ENCODE measurements at regions of chr16 and their contacts with region 1.

Region 1: DNA sequence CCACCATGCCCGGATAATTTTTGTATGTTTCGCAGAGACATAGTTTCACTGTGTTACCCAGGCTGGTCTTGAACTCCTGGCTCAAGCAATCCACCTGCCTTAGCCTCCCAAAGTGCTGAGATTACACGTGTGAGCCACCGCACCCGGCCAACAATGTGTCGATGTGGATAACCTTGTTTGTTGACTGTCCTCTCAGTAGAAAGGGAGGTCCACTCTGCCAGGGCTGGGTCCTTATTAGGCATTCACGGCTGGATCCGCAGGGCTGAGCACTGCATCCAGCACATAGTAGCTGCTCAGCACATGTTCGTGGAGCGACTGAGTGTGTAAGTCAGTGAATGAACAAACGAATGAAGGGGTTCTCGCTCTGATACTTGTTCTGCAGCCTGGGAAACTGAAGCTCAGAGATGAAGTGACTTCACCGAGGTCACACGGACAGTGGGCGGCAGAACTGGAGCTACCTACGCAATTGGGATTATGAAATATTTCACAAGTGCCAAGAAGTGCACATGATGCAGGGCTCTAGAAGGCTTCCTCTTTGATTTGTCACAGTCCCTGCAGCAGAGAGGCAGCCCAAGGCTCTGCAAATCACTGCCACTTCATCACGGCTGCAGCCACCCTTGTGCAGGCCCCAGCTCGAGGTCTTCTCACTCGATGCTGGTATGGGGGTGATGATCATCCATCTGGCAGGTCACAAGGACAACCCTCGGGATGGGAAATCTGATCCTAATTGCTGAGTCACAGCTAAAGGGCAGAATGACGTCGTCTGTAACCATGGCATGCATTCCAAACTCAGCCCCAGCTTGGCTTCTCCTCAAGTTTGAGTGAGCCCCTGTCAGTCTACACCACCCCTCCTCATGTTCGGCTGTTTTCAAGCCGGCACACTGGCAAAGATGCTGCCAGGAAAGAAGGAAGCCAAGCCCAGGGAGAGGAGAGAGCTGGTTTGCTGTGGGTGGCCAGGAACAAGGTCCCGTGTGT is 28.0 kb upstream of the SNN start:
- DNase-seq: peak in 3 of 9 experiments; percentile 20 to 60 (median 57)
- ATAC-seq: no peak
- H3K4me3 ChIP-seq: no peak overlapping the region
- H3K4me3 Mint-ChIP-seq: no peak overlapping the region
- H3K27ac ChIP-seq: no peak overlapping the region
- H3K27ac Mint-ChIP-seq: peak overlapping the region; percentile 27
- H3K4me1 ChIP-seq: peaks cover 10% of the 10 kb centered on the region
- H3K4me1 Mint-ChIP-seq: peaks cover 24% of the 10 kb centered on the region
- H3K27me3 ChIP-seq: no peaks in the 10 kb centered on the region
- H3K27me3 Mint-ChIP-seq: no peaks in the 10 kb centered on the region
- CTCF ChIP-seq: no peak

Region 2: GRCh38 chr16:11407047-11407982 is 232.9 kb before region 1 on chr16:
- CTCF ChIA-PET with region 1: interaction called, 14 read pairs
- POLR2A ChIA-PET with region 1: no interaction called
- intact Hi-C with region 1: loop called in 1 of 2 experiments (anchors 1 kb)
- DNase-seq: peak; percentile 37 to 78 (median 61)
- ATAC-seq: peak; percentile 82
- H3K4me3 ChIP-seq: no peak overlapping the region
- H3K4me3 Mint-ChIP-seq: no peak overlapping the region
- H3K27ac ChIP-seq: no peak overlapping the region
- H3K27ac Mint-ChIP-seq: no peak overlapping the region
- H3K4me1 ChIP-seq: no peaks in the 10 kb centered on the region
- H3K4me1 Mint-ChIP-seq: no peaks in the 10 kb centered on the region
- H3K27me3 ChIP-seq: no peaks in the 10 kb centered on the region
- H3K27me3 Mint-ChIP-seq: no peaks in the 10 kb centered on the region
- CTCF ChIP-seq: peak; percentile 57

Region 3: DNA sequence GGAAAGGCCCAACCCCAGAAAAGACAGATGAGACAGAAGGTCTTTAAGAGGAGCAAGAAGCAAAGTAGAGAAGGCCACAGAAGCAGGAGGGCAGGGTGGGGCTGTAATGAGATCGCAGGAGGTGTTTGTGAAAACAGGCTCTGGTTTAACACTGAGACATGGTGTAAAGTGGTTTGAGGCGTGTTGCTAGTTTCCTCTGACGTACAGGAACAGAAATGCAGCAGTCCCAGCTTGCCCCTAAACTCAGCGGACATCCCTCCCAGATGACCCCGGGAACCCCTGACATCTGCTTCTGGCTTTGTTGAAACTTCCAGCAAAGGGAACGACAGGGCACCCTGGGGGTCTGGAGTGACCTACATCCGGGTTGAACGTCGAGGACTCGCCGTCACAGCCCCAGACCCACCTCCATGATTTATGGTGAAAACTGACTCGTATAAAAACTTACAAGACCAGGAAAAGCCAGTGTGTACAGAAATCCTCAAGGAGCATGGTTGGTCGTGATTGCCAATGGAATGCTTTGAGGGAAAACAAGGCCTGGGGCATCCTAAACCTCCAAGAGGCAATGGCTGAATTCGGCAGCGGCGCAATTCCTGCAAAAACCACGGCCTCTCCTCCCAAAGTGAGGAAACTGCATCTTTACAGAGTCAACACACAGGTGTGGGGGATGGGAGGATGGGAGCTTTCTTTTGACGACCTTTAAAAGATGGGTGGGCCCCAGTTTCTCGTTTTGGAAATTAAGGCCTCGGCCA is 79.3 kb before region 1 on chr16:
- CTCF ChIA-PET with region 1: interaction called, 25 read pairs
- POLR2A ChIA-PET with region 1: interaction called, 5 read pairs
- intact Hi-C with region 1: loop called in 1 of 2 experiments (anchors 1 kb)
- DNase-seq: peak; percentile 55 to 97 (median 76)
- ATAC-seq: peak; percentile 82
- H3K4me3 ChIP-seq: peak overlapping the region; percentile 42 to 56
- H3K4me3 Mint-ChIP-seq: peak overlapping the region; percentile 83
- H3K27ac ChIP-seq: peak overlapping the region; percentile 90 to 97
- H3K27ac Mint-ChIP-seq: peak overlapping the region; percentile 99
- H3K4me1 ChIP-seq: peaks cover 83% of the 10 kb centered on the region
- H3K4me1 Mint-ChIP-seq: peaks cover 84% of the 10 kb centered on the region
- H3K27me3 ChIP-seq: no peaks in the 10 kb centered on the region
- H3K27me3 Mint-ChIP-seq: no peaks in the 10 kb centered on the region
- CTCF ChIP-seq: no peak

Region 4: GRCh38 chr16:11603331-11603750 is 36.9 kb before region 1 on chr16:
- CTCF ChIA-PET with region 1: interaction called, 13 read pairs
- POLR2A ChIA-PET with region 1: no interaction called
- intact Hi-C with region 1: no loop called
- DNase-seq: no peak
- ATAC-seq: no peak
- H3K4me3 ChIP-seq: no peak overlapping the region
- H3K4me3 Mint-ChIP-seq: no peak overlapping the region
- H3K27ac ChIP-seq: no peak overlapping the region
- H3K27ac Mint-ChIP-seq: no peak overlapping the region
- H3K4me1 ChIP-seq: peaks cover 3% of the 10 kb centered on the region
- H3K4me1 Mint-ChIP-seq: peaks cover 9% of the 10 kb centered on the region
- H3K27me3 ChIP-seq: no peaks in the 10 kb centered on the region
- H3K27me3 Mint-ChIP-seq: no peaks in the 10 kb centered on the region
- CTCF ChIP-seq: no peak

Region 5: GRCh38 chr16:11619327-11619851 is 20.8 kb before region 1 on chr16:
- CTCF ChIA-PET with region 1: interaction called, 34 read pairs
- POLR2A ChIA-PET with region 1: interaction called, 5 read pairs
- intact Hi-C with region 1: loop called in 1 of 2 experiments (anchors 2 kb)
- DNase-seq: peak in 7 of 9 experiments; percentile 28 to 75 (median 48)
- ATAC-seq: peak; percentile 25
- H3K4me3 ChIP-seq: no peak overlapping the region
- H3K4me3 Mint-ChIP-seq: peak overlapping the region; percentile 58
- H3K27ac ChIP-seq: peak overlapping the region; percentile 40 to 86
- H3K27ac Mint-ChIP-seq: peak overlapping the region; percentile 98
- H3K4me1 ChIP-seq: peaks cover 77% of the 10 kb centered on the region
- H3K4me1 Mint-ChIP-seq: peaks cover 70% of the 10 kb centered on the region
- H3K27me3 ChIP-seq: no peaks in the 10 kb centered on the region
- H3K27me3 Mint-ChIP-seq: no peaks in the 10 kb centered on the region
- CTCF ChIP-seq: no peak

Measured in CD8-positive, alpha-beta T cell (primary cell).